Calu3 (cell line): ENCODE measurements at regions of chr1 and their contacts with region 1.

Region 1: GRCh38 chr1:216750012-216750627 is 26.9 kb upstream of the ESRRG start:
- DNase-seq: peak; percentile 29
- H3K4me3 Mint-ChIP-seq: no peak overlapping the region
- H3K27ac Mint-ChIP-seq: no peak overlapping the region
- H3K4me1 Mint-ChIP-seq: no peaks in the 10 kb centered on the region
- H3K27me3 Mint-ChIP-seq: no peaks in the 10 kb centered on the region
- CTCF ChIP-seq: peak; percentile 59

Region 2: DNA sequence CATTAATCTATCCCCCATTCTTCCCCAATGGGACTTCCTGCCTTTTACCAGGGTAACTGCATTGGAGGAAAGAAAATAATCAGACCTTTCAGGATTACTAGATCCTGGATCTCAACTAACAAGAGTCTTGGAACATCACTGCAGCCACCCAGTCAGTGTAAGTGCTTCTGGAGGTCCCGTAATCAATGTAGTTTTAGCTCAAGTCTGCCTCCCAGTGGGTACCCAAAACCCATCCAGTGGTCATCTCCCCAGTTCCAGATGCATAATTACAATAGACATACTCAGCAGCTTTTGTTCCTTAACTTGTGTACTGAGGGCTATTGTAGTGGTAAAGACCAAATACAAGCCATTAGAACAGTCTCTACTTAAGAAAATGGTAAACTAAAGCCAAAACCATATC is 561.6 kb after region 1 on chr1:
- CTCF ChIA-PET with region 1: no interaction called
- intact Hi-C with region 1: loop called (anchors 5 kb)
- DNase-seq: peak; percentile 13
- H3K4me3 Mint-ChIP-seq: no peak overlapping the region
- H3K27ac Mint-ChIP-seq: no peak overlapping the region
- H3K4me1 Mint-ChIP-seq: no peaks in the 10 kb centered on the region
- H3K27me3 Mint-ChIP-seq: no peaks in the 10 kb centered on the region
- CTCF ChIP-seq: no peak

Region 3: DNA sequence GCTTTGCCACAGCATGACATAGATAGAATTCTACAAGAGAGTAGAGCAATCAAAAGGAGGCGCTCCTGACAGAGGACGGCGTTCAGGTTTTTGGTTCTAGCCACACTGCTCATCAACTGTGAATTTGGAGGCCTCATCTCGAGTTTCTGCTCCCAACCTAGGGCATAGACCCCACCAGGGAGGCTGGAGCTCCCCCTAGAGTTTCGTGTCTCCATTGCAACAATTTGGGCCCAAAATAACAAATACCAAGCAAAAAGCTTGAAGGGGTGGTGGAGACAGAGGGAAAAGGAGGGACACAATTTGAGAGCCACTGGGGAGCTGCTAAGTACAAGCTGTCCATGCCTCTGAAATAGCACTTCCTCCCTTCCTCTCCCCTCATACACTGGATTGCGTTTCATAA is 583.8 kb after region 1 on chr1:
- CTCF ChIA-PET with region 1: interaction called, 3 read pairs
- intact Hi-C with region 1: loop called (anchors 5 kb)
- DNase-seq: peak; percentile 58
- H3K4me3 Mint-ChIP-seq: no peak overlapping the region
- H3K27ac Mint-ChIP-seq: no peak overlapping the region
- H3K4me1 Mint-ChIP-seq: no peaks in the 10 kb centered on the region
- H3K27me3 Mint-ChIP-seq: no peaks in the 10 kb centered on the region
- CTCF ChIP-seq: peak; percentile 61